Transverse colon (tissue), 4 donors: ENCODE measurements at regions of chr6 and their contacts with region 1.

Region 1: GRCh38 chr6:99746261-99746895 is 139.7 kb downstream of the PRDM13 start:
- DNase-seq: peak; percentile 59
- H3K4me3 ChIP-seq: no peak overlapping the region
- H3K27ac ChIP-seq: no peak overlapping the region
- H3K4me1 ChIP-seq: no peaks in the 10 kb centered on the region
- H3K27me3 ChIP-seq: peaks cover 7% of the 10 kb centered on the region
- CTCF ChIP-seq: peak; percentile 71 to 90 (median 80)
- EP300 ChIP-seq: no peak
- POLR2A ChIP-seq: no peak

Region 2: DNA sequence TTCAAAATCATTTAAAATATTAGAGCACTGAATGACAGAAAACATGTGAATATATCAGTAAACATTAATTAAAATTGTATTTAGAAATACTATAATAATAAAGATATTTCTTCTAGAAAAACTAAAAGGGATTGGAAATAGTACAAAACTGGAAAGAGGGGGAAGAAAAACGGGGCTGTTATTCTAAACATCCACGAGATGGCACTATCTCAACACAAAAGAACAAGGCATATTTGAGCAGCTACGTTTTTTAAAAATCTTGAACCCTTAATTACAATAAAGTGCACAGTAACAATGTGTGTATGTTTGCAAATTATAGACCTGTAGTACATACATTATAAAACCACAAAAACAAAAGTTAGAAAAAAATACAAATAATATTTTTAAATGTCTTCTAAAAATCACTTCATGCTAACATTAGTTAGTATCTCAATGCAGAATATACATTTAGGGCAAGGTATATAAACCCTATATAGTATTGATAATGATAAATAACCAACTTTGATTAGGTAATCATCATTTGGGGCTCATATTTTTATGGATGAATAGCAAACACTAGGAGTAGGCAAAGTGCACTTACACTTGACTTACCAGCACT is 278.8 kb before region 1 on chr6:
- in situ Hi-C with region 1: loop called (anchors 5 to 10 kb)
- intact Hi-C with region 1: loop called (anchors 5 kb)
- DNase-seq: no peak
- H3K4me3 ChIP-seq: no peak overlapping the region
- H3K27ac ChIP-seq: no peak overlapping the region
- H3K4me1 ChIP-seq: no peaks in the 10 kb centered on the region
- H3K27me3 ChIP-seq: no peaks in the 10 kb centered on the region
- CTCF ChIP-seq: peak; percentile 55 to 62 (median 59)
- EP300 ChIP-seq: no peak
- POLR2A ChIP-seq: no peak

Region 3: DNA sequence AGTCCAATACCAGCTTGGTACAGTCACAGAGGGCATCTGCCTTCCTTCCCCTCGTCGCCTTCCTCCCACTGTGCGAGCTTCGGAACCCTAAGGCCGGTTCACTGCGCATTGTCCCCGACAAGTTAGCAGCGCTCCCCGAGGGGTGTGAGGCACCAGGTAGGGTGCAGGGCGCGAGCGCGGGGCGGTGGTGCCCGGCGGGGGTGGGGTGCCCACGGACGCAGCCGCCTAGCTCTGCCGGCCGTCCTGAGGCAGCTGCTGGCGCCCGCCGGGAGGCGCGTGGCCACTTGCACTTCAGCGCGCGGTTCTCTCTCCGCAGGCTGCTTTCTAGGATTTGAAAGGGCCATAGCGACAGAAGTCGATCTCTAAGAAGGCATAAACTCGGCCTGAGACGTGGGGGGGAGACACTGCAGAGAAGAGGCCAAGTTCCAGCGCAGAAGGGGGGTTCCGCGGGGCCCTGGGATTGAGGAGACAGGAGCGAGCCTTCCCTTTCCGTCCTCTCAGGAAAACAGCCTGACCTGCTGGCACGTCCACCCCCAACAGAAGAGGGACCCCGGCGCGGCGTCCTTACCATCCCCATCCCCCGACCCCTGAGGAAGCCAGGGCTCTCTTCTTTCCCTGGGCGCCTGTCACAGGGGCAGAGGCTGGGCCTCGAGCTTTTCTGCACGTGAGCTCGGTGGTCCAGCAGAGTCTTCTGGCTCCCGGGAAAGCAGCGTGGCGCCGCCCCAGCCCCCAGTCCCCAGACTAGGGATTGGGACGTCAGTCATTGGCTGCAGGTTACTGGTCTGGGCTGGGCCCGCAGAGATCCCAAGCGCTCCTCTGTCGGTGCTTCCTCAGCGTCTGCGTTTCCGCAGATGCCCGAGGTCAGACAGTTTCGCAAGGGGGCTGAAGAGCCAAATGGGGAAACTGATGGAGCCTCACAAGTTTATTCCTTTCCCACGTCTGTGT is 155.4 kb before region 1 on chr6:
- in situ Hi-C with region 1: no loop called
- intact Hi-C with region 1: loop called (anchors 5 kb)
- DNase-seq: no peak
- H3K4me3 ChIP-seq: peak overlapping the region in 1 of 4 donors; percentile 10
- H3K27ac ChIP-seq: no peak overlapping the region
- H3K4me1 ChIP-seq: peaks cover 14 to 25% (median 23%) of the 10 kb centered on the region in 4 donors
- H3K27me3 ChIP-seq: peaks cover 90% of the 10 kb centered on the region
- CTCF ChIP-seq: no peak
- EP300 ChIP-seq: no peak
- POLR2A ChIP-seq: no peak